ENCODE measurements at regions of chr17 and their contacts with region 1.

Region 1: GRCh38 chr17:68019675-68020408 is 15.7 kb upstream of the KPNA2 start:
- DNase-seq: peak; percentile 95
- H3K4me3 Mint-ChIP-seq: peak overlapping the region; percentile 86
- H3K27ac Mint-ChIP-seq: peak overlapping the region; percentile 84
- H3K4me1 Mint-ChIP-seq: peaks cover 6% of the 10 kb centered on the region
- H3K27me3 Mint-ChIP-seq: no peaks in the 10 kb centered on the region
- CTCF ChIP-seq: no peak

Region 2: DNA sequence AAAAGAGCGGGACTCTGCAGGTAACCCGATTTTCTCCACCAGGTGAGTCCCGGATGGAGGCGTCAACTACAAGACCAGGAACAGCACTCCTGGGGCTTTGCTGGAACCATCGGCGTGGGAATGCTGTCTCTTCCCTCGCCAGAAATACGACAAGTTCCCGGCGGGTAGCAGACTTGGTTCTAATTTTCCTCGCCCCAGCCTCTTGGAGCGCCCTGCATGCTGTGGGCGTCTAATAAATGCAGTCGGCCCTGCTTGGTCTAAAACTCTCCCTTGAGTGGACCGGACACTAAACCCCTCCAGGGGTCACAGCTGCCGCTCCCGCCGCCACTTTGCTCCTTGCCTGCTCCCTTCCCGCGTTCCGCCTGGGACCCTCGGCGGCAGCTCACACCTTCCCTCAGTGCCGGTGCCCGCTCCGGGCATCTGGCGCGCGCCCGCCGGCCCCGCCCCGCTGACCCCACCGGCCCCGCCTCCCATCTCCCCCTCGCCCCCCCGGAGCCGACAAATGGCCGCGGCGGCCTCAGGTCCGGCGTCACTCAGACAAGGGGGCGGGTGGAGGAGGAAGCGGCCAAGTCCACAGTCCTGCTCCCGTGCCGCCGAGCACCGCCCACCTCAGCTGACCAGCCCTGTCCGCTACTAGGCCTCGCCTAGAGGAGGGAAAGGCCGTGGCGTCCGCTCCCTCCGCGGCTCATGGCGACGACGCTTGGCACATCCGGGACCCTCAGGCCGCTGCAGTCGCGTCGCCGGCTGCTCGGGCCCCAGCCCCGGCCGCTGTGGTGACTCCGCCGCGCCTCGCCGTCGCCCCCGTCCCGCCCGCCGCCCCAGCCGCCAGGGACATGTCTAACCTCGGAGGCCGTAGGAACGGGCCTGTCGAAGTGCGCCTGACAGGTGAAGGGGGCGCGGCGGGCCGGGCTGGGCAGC is 81.5 kb after region 1 on chr17:
- CTCF ChIA-PET with region 1: no interaction called
- POLR2A ChIA-PET with region 1: interaction called, 10 read pairs
- intact Hi-C with region 1: no loop called
- DNase-seq: peak; percentile 93
- H3K4me3 Mint-ChIP-seq: peak overlapping the region; percentile 96
- H3K27ac Mint-ChIP-seq: peak overlapping the region; percentile 94
- H3K4me1 Mint-ChIP-seq: peaks cover 10% of the 10 kb centered on the region
- H3K27me3 Mint-ChIP-seq: no peaks in the 10 kb centered on the region
- CTCF ChIP-seq: no peak

Measured in MCF 10A (cell line).